ENCODE measurements at regions of chr12 and their contacts with region 1.

Region 1: DNA sequence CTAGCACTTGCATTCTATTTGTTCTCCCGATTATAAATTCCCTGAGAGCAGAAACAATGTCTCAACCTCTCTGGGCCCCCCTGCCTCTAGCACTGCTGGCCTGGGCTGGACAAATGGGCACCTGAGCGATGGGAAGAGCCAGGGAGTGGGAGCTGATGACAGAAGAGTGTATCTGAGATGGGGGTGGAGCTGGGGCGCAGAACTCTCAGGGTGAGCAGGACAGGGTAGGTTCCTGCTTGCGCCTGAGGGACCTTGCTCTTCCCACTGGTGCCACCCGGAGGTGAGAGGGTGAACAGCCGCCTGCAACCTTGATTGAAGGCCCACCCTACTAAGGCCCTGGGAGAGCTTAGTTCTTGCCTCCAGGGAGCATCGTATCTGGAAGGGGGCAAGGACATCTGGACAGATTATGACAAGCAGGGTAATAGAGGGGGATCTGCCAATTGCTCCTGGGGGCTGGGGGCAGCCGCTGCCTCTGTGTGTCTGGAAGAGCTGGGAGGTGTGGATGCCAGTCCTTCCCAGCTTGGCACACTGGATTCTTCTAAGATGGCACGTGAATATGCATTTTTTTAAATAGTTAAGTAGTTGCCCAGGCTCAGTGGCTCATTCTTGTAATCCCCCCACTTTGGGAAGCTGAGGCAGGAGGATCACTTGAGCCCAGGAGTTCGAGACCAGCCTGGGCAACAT is 43.0 kb upstream of the TSPAN9 start:
- DNase-seq: peak; percentile 54 to 92
- H3K4me3 ChIP-seq: no peak overlapping the region
- H3K27ac ChIP-seq: no peak overlapping the region
- H3K4me1 ChIP-seq: no peaks in the 10 kb centered on the region; a peak in 3 of 7 replicates
- H3K27me3 ChIP-seq: no peaks in the 10 kb centered on the region
- CTCF ChIP-seq: peak; percentile 78 to 92 (median 88)
- EP300 ChIP-seq: no peak
- POLR2A ChIP-seq: no peak
- RAD21 ChIP-seq: peak; percentile 77 to 83

Region 2: GRCh38 chr12:2752676-2753371 is 281.4 kb before region 1 on chr12:
- CTCF ChIA-PET with region 1: no interaction called
- POLR2A ChIA-PET with region 1: no interaction called
- DNase-seq: peak; percentile 74 to 97
- H3K4me3 ChIP-seq: peak overlapping the region in 3 of 4 experiments; percentile 5 to 45 (median 14); a peak in 5 of 8 replicates
- H3K27ac ChIP-seq: no peak overlapping the region
- H3K4me1 ChIP-seq: peaks cover 6 to 18% (median 15%) of the 10 kb centered on the region in 4 experiments
- H3K27me3 ChIP-seq: peaks cover 0 to 9% (median 8%) of the 10 kb centered on the region in 4 experiments; a peak in 4 of 7 replicates
- CTCF ChIP-seq: peak in 2 of 3 experiments; percentile 1 to 25; a peak in 2 of 4 replicates
- EP300 ChIP-seq: peak in 1 of 2 experiments; percentile 68; a peak in 1 of 3 replicates
- POLR2A ChIP-seq: no peak
- RAD21 ChIP-seq: peak; percentile 20 to 42; a peak in 2 of 4 replicates

Region 3: GRCh38 chr12:2845280-2845679 is 188.9 kb before region 1 on chr12:
- CTCF ChIA-PET with region 1: interaction called, 19 read pairs
- POLR2A ChIA-PET with region 1: no interaction called
- DNase-seq: no peak
- H3K4me3 ChIP-seq: no peak overlapping the region
- H3K27ac ChIP-seq: no peak overlapping the region
- H3K4me1 ChIP-seq: peaks cover 0 to 4% (median 3%) of the 10 kb centered on the region in 4 experiments; a peak in 6 of 7 replicates
- H3K27me3 ChIP-seq: no peaks in the 10 kb centered on the region
- CTCF ChIP-seq: no peak
- EP300 ChIP-seq: no peak
- POLR2A ChIP-seq: no peak
- RAD21 ChIP-seq: no peak

Region 4: GRCh38 chr12:2959505-2960389 is 74.5 kb before region 1 on chr12:
- CTCF ChIA-PET with region 1: interaction called, 13 read pairs
- POLR2A ChIA-PET with region 1: interaction called, 7 read pairs
- DNase-seq: peak in 1 of 2 experiments; percentile 73
- H3K4me3 ChIP-seq: peak overlapping the region; percentile 58 to 87 (median 72)
- H3K27ac ChIP-seq: peak overlapping the region; percentile 82; the same call in 1 of the 2 replicates
- H3K4me1 ChIP-seq: peaks cover 11 to 38% (median 21%) of the 10 kb centered on the region in 4 experiments
- H3K27me3 ChIP-seq: peaks cover 0 to 6% (median 3%) of the 10 kb centered on the region in 4 experiments; a peak in 4 of 7 replicates
- CTCF ChIP-seq: no peak
- EP300 ChIP-seq: no peak
- POLR2A ChIP-seq: peak in 1 of 2 experiments; percentile 11; a peak in 1 of 3 replicates
- RAD21 ChIP-seq: no peak

Region 5: GRCh38 chr12:3004655-3005565 is 29.3 kb before region 1 on chr12:
- CTCF ChIA-PET with region 1: interaction called, 14 read pairs
- POLR2A ChIA-PET with region 1: interaction called, 3 read pairs
- DNase-seq: no peak
- H3K4me3 ChIP-seq: no peak overlapping the region
- H3K27ac ChIP-seq: no peak overlapping the region
- H3K4me1 ChIP-seq: peaks cover 0 to 9% (median 6%) of the 10 kb centered on the region in 4 experiments; a peak in 5 of 7 replicates
- H3K27me3 ChIP-seq: no peaks in the 10 kb centered on the region
- CTCF ChIP-seq: peak; percentile 45 to 73 (median 58)
- EP300 ChIP-seq: no peak
- POLR2A ChIP-seq: no peak
- RAD21 ChIP-seq: peak; percentile 12 to 41; a peak in 2 of 4 replicates

Region 6: DNA sequence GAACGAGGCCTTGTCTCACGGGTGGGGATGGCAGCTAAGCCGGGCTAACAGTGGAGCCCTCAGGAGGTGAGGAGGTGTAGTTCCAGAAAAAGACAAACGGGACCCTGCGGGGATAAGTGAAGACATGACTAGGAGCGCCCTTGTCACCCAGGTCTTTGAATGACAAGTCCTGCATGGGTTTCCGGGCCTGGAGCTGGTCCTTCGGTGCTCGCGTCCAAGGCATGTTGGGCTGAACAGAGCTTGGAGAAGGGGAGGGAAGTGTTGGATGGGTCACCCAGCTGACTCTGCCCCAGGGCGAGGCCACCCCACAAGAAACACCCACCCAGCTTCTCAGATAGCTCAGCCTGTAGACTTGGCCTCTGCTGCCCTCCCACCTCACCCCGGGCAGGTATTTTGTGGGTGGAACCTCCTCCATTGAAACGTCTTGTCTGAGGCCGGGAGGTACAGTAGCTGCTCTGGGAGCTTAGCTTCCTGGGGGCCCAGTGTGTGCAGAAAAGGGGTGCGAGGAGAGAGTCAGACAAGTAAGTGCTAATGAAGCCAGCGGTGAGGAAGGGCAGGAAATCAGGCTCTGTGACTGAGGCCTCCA is 11.9 kb before region 1 on chr12:
- CTCF ChIA-PET with region 1: interaction called, 30 read pairs
- POLR2A ChIA-PET with region 1: interaction called, 5 read pairs
- DNase-seq: no peak
- H3K4me3 ChIP-seq: no peak overlapping the region
- H3K27ac ChIP-seq: no peak overlapping the region
- H3K4me1 ChIP-seq: no peaks in the 10 kb centered on the region
- H3K27me3 ChIP-seq: no peaks in the 10 kb centered on the region
- CTCF ChIP-seq: no peak
- EP300 ChIP-seq: no peak
- POLR2A ChIP-seq: no peak
- RAD21 ChIP-seq: 0 out of 4 replicates have a peak, but pooled peaks of 1 of the 2 experiments have one; percentile 4

Region 7: GRCh38 chr12:3225154-3225795 is 191.1 kb after region 1 on chr12:
- CTCF ChIA-PET with region 1: no interaction called
- POLR2A ChIA-PET with region 1: no interaction called
- DNase-seq: no peak
- H3K4me3 ChIP-seq: no peak overlapping the region
- H3K27ac ChIP-seq: no peak overlapping the region
- H3K4me1 ChIP-seq: peaks cover 0 to 18% (median 4%) of the 10 kb centered on the region in 4 experiments; a peak in 3 of 7 replicates
- H3K27me3 ChIP-seq: no peaks in the 10 kb centered on the region
- CTCF ChIP-seq: no peak
- EP300 ChIP-seq: no peak
- POLR2A ChIP-seq: no peak
- RAD21 ChIP-seq: no peak

Region 8: GRCh38 chr12:3336606-3337311 is 302.6 kb after region 1 on chr12:
- CTCF ChIA-PET with region 1: no interaction called
- POLR2A ChIA-PET with region 1: no interaction called
- DNase-seq: no peak
- H3K4me3 ChIP-seq: no peak overlapping the region
- H3K27ac ChIP-seq: no peak overlapping the region
- H3K4me1 ChIP-seq: peaks cover 4 to 19% (median 8%) of the 10 kb centered on the region in 4 experiments
- H3K27me3 ChIP-seq: peaks cover 0 to 1% (median 0%) of the 10 kb centered on the region in 4 experiments; a peak in 1 of 7 replicates
- CTCF ChIP-seq: no peak
- EP300 ChIP-seq: no peak
- POLR2A ChIP-seq: no peak
- RAD21 ChIP-seq: no peak

Measured in H1 (cell line).